OCI-LY7 (cell line): ENCODE measurements at regions of chr2 and their contacts with region 1.

Region 1: DNA sequence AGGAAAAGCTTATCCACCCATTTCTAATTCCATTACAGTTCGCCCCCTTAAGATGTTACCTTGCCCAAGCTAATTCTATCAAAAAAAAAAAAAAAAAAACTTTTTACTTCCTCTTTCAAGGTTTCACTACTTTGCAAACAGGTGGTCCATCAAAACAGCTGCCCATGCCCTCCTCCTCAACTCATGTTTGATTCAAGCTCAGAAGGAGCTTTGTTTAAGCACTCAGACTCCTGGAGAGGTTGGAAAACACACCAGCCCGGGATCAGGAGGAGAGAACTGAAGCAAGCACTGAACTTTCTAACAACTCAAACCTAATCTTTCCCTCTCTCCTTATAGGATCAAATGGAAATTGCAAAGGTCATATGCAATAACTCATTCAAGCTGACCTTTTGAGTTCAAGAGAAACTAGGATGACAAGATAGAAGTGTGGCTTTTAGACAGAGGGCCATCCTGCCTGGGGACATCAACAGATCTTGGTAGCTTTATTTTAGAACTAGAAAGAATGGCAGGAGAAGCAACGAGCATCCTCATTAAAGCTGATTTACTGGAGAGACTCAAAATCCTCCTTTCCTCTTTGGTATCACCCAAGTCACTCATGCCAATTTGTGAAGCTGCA is 28.3 kb upstream of the FZD7 start:
- DNase-seq: peak; percentile 78
- H3K4me3 ChIP-seq: no peak overlapping the region
- H3K27ac ChIP-seq: no peak overlapping the region
- H3K4me1 ChIP-seq: peaks cover 11% of the 10 kb centered on the region
- CTCF ChIP-seq: no peak

Region 2: GRCh38 chr2:202017940-202018339 is 12.6 kb after region 1 on chr2:
- CTCF ChIA-PET with region 1: no interaction called
- POLR2A ChIA-PET with region 1: interaction called, 15 read pairs
- intact Hi-C with region 1: no loop called
- DNase-seq: no peak
- H3K4me3 ChIP-seq: no peak overlapping the region
- H3K27ac ChIP-seq: no peak overlapping the region
- H3K4me1 ChIP-seq: no peaks in the 10 kb centered on the region
- CTCF ChIP-seq: no peak